Gastrocnemius medialis (tissue), 4 donors: ENCODE measurements at regions of chr22 and their contacts with region 1.

Region 1: GRCh38 chr22:29635734-29636357 is 32.4 kb downstream of the NF2 start:
- DNase-seq: no peak
- ATAC-seq: peak in 1 of 2 donors; percentile 39
- H3K4me3 ChIP-seq: no peak overlapping the region
- H3K27ac ChIP-seq: no peak overlapping the region
- H3K4me1 ChIP-seq: no peaks in the 10 kb centered on the region
- H3K27me3 ChIP-seq: no peaks in the 10 kb centered on the region
- CTCF ChIP-seq: peak; percentile 16 to 60 (median 51)
- POLR2A ChIP-seq: no peak

Region 2: GRCh38 chr22:29470159-29470855 is 165.5 kb before region 1 on chr22:
- in situ Hi-C with region 1: no loop called
- intact Hi-C with region 1: no loop called
- DNase-seq: no peak
- ATAC-seq: peak in 1 of 2 donors; percentile 30
- H3K4me3 ChIP-seq: peak overlapping the region; percentile 13 to 36 (median 26)
- H3K27ac ChIP-seq: no peak overlapping the region
- H3K4me1 ChIP-seq: peaks cover 0 to 7% of the 10 kb centered on the region in 2 donors
- H3K27me3 ChIP-seq: peaks cover 6 to 18% (median 13%) of the 10 kb centered on the region in 3 donors
- CTCF ChIP-seq: peak; percentile 10 to 66 (median 48)
- POLR2A ChIP-seq: no peak

Region 3: DNA sequence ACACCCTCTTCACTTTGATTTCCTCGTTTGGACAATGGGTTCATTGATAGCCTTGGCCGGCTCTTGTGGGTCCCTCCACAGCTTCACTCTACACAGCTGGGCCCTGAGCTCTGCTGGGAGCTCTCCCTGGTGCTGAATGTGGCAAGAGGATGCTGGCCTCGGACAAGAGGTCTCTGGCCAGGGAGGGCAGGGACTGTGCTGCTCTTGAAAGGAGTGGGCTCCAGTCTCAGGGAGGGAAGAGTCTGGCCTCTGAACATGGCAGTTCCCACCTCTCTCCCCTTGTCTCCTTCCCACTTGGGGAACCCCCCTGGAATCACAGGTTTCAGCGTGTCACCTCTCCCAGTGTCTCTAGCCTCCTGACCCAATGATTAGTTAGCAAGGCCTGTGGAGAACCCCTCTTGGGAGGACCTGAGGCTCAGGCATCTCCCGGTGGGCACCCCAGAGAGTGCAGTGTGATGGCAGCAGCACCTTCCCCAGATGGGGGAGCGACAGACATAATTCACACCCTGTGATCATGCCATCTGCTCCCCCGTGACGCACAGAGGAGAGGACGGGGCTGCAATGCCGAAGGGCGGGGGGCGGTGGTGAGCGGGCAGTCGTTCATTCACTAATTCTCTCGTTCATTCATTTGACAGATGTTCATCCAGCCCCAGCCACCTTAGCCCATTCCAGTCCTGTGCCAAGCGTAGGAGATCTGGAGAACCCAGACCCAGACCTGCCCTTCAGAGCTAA is 81.1 kb after region 1 on chr22:
- in situ Hi-C with region 1: no loop called
- intact Hi-C with region 1: no loop called
- DNase-seq: no peak
- ATAC-seq: peak in 1 of 2 donors; percentile 58
- H3K4me3 ChIP-seq: no peak overlapping the region
- H3K27ac ChIP-seq: no peak overlapping the region
- H3K4me1 ChIP-seq: no peaks in the 10 kb centered on the region
- H3K27me3 ChIP-seq: peaks cover 24 to 26% (median 24%) of the 10 kb centered on the region in 3 donors
- CTCF ChIP-seq: no peak
- POLR2A ChIP-seq: no peak

Region 4: DNA sequence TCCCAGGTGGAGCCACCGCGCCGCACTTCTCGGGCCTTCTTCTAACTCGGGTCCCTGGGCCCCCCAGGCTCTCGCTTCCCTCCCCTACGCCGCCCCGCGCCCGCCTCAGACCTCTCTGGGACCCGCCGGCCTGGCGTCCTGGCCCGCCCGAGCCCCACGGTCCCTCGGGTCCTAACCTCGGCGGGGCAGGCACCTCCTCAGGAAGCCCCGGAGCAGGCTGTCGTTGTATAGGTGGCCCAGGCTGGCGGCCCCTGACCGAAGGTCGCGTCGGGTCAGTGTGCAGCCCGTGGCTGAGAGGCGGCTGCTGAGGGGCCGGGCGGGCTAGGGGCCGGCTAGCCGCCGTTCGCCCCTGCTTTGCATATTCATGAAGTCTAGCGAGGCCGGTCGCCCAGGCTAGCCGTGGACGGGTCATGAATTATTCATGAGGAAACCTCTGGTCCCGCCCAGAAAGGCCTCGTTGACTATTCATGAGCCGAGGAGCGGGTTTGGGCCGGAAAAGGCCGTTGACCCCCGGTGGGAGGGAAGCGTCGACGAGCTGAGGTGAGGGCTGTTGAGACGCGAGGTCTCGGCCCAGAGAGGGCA is 444.2 kb after region 1 on chr22 and contains the start of gene HORMAD2:
- in situ Hi-C with region 1: loop called in 1 of 4 experiments (anchors 10 kb)
- intact Hi-C with region 1: no loop called
- DNase-seq: no peak
- ATAC-seq: no peak
- H3K4me3 ChIP-seq: peak within 1 kb of the TSS in 2 of 4 donors; percentile 32 to 38
- H3K27ac ChIP-seq: no peak within 1 kb of the TSS
- H3K4me1 ChIP-seq: no peaks in the 10 kb centered on the region
- H3K27me3 ChIP-seq: peaks cover 8 to 18% (median 9%) of the 10 kb centered on the region in 3 donors
- CTCF ChIP-seq: no peak
- POLR2A ChIP-seq: no peak
- total RNA-seq, gene HORMAD2: not detected

Region 5: GRCh38 chr22:30089655-30089974 is 453.8 kb after region 1 on chr22:
- in situ Hi-C with region 1: loop called in 1 of 4 experiments (anchors 10 kb)
- intact Hi-C with region 1: loop called (anchors 2 kb)
- DNase-seq: no peak
- ATAC-seq: peak; percentile 36 to 45
- H3K4me3 ChIP-seq: no peak overlapping the region
- H3K27ac ChIP-seq: no peak overlapping the region
- H3K4me1 ChIP-seq: peaks cover 0 to 7% of the 10 kb centered on the region in 2 donors
- H3K27me3 ChIP-seq: peaks cover 0 to 10% (median 2%) of the 10 kb centered on the region in 3 donors
- CTCF ChIP-seq: no peak
- POLR2A ChIP-seq: no peak